ENCODE measurements at regions of chr6 and their contacts with region 1.

Region 1: GRCh38 chr6:106187424-106187982 is 101.4 kb downstream of the PRDM1 start:
- DNase-seq: no peak
- CTCF ChIP-seq: no peak

Region 2: DNA sequence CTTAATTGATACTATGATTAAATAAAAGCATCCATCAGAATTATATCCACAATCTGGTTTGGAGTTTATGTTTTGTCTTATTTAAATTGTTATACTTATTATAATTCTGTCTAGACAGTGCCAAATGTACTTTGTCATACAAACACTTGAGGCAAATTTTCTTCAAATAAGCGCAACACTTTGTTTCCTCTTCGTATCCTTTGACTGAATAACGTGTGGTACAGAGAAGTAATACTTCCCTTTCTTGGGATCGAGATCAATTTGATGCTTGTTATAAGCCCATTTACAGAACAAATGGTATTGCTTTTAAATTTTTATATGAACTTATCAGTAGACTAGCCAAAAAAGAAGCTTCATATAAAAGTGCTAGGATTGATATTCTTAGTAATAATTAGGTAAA is 27.0 kb after region 1 on chr6:
- CTCF ChIA-PET with region 1: interaction called, 15 read pairs
- POLR2A ChIA-PET with region 1: no interaction called
- DNase-seq: no peak
- CTCF ChIP-seq: no peak

Measured in GM10248 (cell line).